AG04450 (cell line): ENCODE measurements at regions of chr4 and their contacts with region 1.

Region 1: DNA sequence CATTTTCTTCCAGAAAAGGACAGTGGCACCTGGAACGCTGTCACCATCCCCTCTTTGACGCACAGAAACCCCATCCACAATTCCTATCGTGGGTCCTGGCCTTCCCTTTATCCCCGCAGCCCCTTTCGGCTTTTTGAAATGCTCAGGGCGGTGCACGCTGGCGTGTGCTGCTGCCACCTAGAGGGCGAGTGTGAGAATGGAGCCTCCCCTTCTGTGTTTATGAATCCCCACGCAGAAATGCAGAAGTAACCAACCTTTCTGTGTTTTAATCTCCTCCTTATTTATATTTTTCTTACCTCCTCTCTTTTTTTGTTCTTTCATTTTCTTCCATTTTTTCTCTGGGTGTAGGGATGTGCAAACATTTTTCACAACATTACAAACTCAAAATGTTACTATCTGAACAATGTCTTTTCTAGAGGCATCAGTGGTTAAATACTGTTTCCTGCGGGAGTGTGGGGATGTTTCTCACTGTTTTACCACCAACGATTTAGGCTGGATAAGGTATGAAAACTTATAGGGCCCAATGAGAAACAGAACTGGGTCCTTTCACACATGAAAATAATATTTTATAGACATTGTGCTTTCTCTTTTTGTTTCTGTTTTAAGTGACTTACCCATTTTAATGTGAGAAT is 50.0 kb downstream of the TMA16 start:
- DNase-seq: no peak
- H3K4me3 ChIP-seq: peak overlapping the region; percentile 44
- H3K27ac ChIP-seq: no peak overlapping the region
- H3K27me3 ChIP-seq: no peaks in the 10 kb centered on the region
- CTCF ChIP-seq: peak; percentile 98

Region 2: DNA sequence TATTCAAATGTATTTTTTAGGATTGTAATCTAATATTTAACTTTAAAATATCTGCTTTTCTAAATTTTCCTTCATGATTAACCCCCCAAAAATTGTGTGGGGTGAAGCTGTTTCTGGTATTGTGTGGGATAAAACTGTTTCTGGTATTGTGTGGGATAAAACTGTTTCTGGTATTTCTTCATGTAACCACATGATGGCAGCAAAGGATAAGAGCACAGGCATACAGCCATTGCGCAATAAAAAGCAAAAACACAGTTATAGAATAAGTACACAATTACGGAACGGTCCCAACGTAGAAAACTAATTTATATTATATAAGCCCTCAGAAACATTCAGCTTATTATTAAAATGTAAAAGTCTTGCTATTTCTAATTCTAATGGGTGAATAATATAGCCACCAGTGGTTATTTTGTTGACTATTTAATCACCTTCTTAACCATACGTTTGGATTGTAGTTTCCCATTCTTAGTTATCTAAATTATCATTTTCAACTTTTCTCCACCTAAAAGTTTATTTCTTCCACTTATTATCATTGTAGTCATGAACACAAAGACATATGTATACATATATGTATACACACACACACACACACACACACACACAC is 1046.9 kb before region 1 on chr4:
- CTCF ChIA-PET with region 1: interaction called, 19 read pairs
- POLR2A ChIA-PET with region 1: no interaction called
- DNase-seq: peak; percentile 4
- H3K4me3 ChIP-seq: no peak overlapping the region
- H3K27ac ChIP-seq: no peak overlapping the region
- H3K27me3 ChIP-seq: no peaks in the 10 kb centered on the region
- CTCF ChIP-seq: peak; percentile 81

Region 3: DNA sequence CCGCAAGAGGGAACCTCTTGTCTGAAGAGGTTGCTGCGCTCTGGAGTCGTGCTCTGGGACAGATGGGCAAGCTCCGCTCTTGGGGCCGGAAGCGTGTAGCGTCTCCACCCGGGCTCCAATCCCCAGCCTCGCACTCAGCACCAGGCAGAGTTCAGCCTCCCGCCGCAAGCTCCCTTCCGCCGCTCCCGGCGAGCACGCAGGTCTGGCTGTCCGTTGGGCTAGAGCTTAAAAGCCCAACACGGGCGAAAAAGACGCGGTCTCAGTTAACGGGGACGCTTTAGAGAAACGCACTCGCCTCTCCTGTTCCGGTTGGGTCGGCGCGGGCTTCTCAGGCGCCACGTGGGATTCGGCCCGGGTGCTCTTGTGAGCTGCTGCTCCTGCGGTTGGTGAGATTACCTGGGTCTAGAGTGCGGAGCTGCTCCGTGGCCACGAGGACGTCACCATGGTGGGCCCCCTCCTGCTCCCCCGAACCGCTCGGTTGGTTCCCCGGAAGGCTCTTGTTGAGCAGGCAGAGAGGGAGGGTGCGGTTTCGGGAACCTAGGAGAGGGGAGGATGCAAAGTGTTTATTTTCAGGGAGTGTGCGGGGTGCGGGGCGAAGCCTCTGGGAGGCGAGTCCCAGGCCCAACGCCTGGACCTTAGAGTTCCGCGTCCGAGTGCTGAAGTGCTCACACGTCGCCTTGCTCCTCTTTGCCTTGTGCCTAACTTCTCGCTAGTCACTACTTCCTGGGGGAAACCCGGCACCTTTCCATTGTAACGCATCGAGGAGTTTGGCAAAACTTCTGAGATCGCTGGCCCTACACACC is 50.0 kb before region 1 on chr4 and contains the start of gene TMA16:
- CTCF ChIA-PET with region 1: interaction called, 43 read pairs
- POLR2A ChIA-PET with region 1: interaction called, 41 read pairs
- DNase-seq: peak; percentile 87
- H3K4me3 ChIP-seq: peak within 1 kb of the TSS; percentile 91
- H3K27ac ChIP-seq: peak within 1 kb of the TSS; percentile 95
- H3K27me3 ChIP-seq: no peaks in the 10 kb centered on the region
- CTCF ChIP-seq: no peak
- polyA plus RNA-seq, gene TMA16: 15.3 and 21.1 TPM in 2 replicates

Region 4: GRCh38 chr4:163554870-163555465 is 10.4 kb after region 1 on chr4:
- CTCF ChIA-PET with region 1: interaction called, 66 read pairs
- POLR2A ChIA-PET with region 1: no interaction called
- DNase-seq: no peak
- H3K4me3 ChIP-seq: no peak overlapping the region
- H3K27ac ChIP-seq: no peak overlapping the region
- H3K27me3 ChIP-seq: no peaks in the 10 kb centered on the region
- CTCF ChIP-seq: peak; percentile 71

Region 5: DNA sequence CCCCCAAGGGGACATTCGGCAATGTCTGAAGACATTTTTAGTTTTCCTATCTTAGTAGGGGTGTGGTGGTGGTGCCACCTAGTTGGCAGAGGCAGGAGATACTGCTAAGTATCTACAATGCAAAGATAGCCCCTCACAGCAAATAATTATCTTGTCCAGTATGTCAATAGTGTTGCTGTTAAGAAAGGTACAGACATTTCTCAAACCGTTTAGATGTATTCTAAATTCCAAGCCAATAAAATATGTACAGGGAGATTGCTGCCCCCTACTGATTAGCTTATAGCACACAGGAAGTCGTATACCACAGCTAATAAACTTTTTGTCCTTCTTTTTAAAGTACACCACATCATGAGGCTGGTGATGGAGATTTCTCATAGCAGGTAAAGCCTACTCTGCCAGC is 210.5 kb after region 1 on chr4:
- CTCF ChIA-PET with region 1: interaction called, 361 read pairs
- POLR2A ChIA-PET with region 1: no interaction called
- DNase-seq: no peak
- H3K4me3 ChIP-seq: no peak overlapping the region
- H3K27ac ChIP-seq: no peak overlapping the region
- H3K27me3 ChIP-seq: no peaks in the 10 kb centered on the region
- CTCF ChIP-seq: peak; percentile 75

Region 6: GRCh38 chr4:165096776-165097175 is 1552.3 kb after region 1 on chr4:
- CTCF ChIA-PET with region 1: interaction called, 36 read pairs
- POLR2A ChIA-PET with region 1: no interaction called
- DNase-seq: no peak
- H3K4me3 ChIP-seq: no peak overlapping the region
- H3K27ac ChIP-seq: no peak overlapping the region
- H3K27me3 ChIP-seq: no peaks in the 10 kb centered on the region
- CTCF ChIP-seq: peak; percentile 61